Caco-2 (cell line): ENCODE measurements at regions of chr1 and their contacts with region 1.

Region 1: DNA sequence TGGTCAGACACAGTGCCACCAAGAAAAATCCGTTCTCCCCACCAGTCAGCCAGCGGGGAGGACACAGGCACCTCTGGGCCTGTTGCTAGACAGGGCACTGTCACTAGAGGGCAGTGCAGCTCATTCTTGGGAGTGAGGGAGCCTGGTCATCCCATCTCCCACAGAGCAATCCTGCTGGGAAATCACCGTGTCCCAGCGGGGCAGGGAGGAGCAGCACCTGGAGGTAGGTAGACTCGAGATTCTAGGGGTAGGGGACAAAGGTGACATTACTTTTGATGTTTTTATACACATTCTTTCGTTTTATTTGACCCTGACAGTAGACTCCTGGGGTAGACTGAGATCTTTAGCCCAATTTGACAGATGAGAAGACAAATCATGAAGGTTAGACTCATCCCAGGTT is 6.7 kb upstream of the CAMK1G start:
- DNase-seq: peak; percentile 83 to 89
- H3K4me3 ChIP-seq: no peak overlapping the region
- H3K4me3 Mint-ChIP-seq: no peak overlapping the region
- H3K27ac Mint-ChIP-seq: no peak overlapping the region
- H3K4me1 ChIP-seq: no peaks in the 10 kb centered on the region
- H3K4me1 Mint-ChIP-seq: peaks cover 6% of the 10 kb centered on the region
- H3K27me3 ChIP-seq: no peaks in the 10 kb centered on the region
- H3K27me3 Mint-ChIP-seq: peaks cover 11% of the 10 kb centered on the region
- CTCF ChIP-seq: peak; percentile 84 to 95

Region 2: DNA sequence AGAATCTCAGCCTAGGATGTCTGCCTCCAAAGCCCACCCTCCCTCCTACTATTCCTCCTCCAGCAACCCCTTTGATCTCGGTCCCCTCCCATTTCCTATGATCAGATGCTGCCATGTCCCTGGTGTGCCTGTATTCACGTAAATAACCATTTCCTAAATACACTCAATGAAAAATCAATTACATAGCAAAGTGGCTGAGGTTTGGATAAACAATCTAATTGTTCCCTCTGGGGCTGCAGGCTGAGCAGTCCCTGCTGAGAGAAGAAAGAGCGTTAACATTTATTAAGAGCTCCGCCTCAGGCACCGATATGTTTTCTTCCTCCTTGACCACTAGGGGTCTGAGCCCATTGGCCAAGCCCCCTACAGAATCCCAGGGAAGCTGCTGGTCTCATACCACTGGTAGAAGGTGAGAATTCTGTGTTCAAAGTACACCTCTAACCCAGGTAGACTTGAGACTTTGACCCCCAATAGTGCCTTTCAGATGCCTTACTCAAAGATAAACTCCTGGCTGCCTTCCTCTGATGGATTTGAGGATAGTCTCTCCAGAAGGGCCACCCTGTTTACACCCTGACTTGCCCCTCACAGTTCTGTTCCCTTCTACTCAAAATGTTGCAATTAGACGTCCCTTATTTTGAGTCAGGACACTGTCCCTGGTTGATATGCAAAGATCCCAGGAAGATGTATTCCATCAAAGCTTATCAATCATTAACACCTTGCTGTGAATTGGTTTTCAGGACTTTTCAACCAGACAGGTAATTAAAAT is 27.2 kb before region 1 on chr1:
- CTCF ChIA-PET with region 1: no interaction called
- POLR2A ChIA-PET with region 1: no interaction called
- intact Hi-C with region 1: no loop called
- DNase-seq: peak; percentile 30 to 46
- H3K4me3 ChIP-seq: no peak overlapping the region
- H3K4me3 Mint-ChIP-seq: no peak overlapping the region
- H3K27ac Mint-ChIP-seq: no peak overlapping the region
- H3K4me1 ChIP-seq: peaks cover 10% of the 10 kb centered on the region
- H3K4me1 Mint-ChIP-seq: peaks cover 7% of the 10 kb centered on the region
- H3K27me3 ChIP-seq: no peaks in the 10 kb centered on the region
- H3K27me3 Mint-ChIP-seq: no peaks in the 10 kb centered on the region
- CTCF ChIP-seq: peak; percentile 37 to 51

Region 3: DNA sequence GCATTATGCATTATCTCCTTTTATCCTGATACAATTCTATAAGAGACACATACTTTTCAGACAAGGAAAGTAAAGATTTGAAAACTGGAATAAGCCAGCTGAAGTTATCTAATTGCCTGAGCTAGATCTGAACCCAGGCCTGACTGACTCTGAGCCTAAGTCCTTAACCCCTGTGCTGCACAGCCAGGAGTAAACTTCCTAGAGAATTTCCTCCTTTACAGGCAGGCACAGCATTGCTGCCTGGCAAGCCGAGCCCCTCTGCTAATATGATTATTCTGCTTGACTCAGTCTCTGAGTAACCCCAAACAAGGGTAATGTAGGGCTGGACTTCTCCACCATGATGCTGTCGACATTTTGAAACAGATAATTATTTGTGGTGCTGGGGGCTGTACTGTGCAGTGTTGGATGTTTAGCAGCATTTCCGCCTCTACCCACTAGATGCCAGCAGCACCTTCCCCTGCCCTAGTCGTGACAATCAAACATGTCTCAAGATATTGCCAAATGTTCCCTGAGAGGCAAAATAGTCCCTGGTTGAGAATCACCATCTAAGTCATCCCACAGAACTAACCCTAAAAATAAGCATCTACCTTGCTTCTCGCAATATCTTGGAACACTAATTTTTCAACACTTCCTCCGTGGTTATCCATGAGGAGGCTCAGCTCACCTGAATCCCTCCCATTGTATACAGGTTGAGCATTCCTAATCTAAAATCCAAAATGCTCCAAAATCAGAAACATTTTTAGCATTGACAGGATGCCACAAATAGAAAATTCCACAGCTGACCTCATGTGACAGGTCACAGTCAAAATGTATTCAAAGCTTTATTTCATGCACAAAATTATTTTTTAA is 25.2 kb after region 1 on chr1:
- CTCF ChIA-PET with region 1: no interaction called
- POLR2A ChIA-PET with region 1: no interaction called
- intact Hi-C with region 1: loop called (anchors 2 kb)
- DNase-seq: peak in 1 of 2 experiments; percentile 47
- H3K4me3 ChIP-seq: no peak overlapping the region
- H3K4me3 Mint-ChIP-seq: no peak overlapping the region
- H3K27ac Mint-ChIP-seq: no peak overlapping the region
- H3K4me1 ChIP-seq: no peaks in the 10 kb centered on the region
- H3K4me1 Mint-ChIP-seq: no peaks in the 10 kb centered on the region
- H3K27me3 ChIP-seq: no peaks in the 10 kb centered on the region
- H3K27me3 Mint-ChIP-seq: peaks cover 8% of the 10 kb centered on the region
- CTCF ChIP-seq: peak; percentile 75 to 80

Region 4: DNA sequence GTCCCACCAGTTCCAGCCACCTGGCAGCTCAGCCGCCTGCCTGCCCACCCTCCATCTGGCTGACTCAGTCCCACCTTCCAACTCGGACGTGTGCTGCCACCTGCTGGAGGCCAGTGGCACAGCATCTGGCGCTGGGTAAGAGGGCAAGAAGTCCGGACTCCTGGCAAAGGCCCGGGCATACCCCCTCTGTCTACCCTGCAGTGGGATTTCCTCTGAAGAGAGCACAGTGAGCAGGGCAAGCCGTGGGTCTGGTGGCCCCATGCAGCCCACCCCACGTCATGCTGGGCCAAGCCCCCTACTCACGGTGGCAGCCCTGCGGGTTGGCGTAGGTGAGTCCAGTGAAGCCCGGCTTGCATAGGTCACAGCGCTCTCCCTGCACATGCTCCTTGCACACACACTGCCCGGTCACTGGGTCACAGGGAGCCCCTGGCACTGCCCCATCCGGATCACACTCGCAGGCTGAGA is 51.0 kb after region 1 on chr1:
- CTCF ChIA-PET with region 1: interaction called, 7 read pairs
- POLR2A ChIA-PET with region 1: no interaction called
- intact Hi-C with region 1: loop called (anchors 1 kb)
- DNase-seq: peak; percentile 53 to 74
- H3K4me3 ChIP-seq: no peak overlapping the region
- H3K4me3 Mint-ChIP-seq: no peak overlapping the region
- H3K27ac Mint-ChIP-seq: no peak overlapping the region
- H3K4me1 ChIP-seq: no peaks in the 10 kb centered on the region
- H3K4me1 Mint-ChIP-seq: no peaks in the 10 kb centered on the region
- H3K27me3 ChIP-seq: no peaks in the 10 kb centered on the region
- H3K27me3 Mint-ChIP-seq: no peaks in the 10 kb centered on the region
- CTCF ChIP-seq: peak; percentile 93 to 94

Region 5: DNA sequence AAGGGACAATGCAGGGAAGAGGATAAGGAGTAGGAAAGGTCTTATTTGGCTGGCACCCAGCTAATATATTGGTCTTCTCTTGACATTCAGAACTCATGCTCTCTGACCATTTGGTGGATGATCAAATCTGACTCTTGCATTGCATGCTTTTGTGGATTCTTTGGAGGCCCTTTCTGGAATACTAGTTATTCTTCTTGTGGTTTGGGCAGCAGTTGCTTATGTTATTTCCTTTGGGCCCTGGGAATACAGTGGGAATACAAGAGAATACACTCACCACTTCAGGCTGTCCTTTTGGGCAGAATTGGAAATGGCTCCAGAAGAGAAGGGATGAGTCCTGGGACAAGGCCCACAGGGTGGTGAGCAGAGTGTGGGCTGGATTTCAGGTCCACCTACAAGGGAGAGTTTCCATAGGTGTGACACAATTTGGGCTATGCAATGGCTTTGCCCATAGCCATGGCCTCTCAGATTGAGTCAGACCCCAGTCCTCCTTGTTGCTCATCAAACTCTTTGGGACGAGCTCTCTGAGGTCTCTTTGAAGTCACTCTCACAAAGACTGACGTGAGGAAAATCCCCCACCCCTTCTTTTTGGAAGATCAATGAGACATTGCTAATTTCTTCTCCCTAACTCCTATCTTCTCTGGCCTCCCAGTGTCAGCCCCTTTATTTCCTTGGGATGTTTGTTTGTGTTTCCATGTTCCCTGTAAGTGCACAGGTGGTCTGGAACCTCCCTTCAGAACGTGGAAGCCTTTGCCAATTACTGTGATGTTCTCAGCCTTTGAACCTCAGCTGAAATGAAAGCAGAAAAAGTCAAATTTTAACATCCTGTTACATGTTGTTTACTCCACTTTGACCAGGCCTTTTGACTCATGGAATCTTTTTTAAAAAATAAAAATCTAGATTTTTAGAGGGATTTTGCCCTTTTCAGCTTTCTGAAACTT is 147.2 kb after region 1 on chr1:
- CTCF ChIA-PET with region 1: no interaction called
- POLR2A ChIA-PET with region 1: no interaction called
- intact Hi-C with region 1: no loop called
- DNase-seq: no peak
- H3K4me3 ChIP-seq: no peak overlapping the region
- H3K4me3 Mint-ChIP-seq: no peak overlapping the region
- H3K27ac Mint-ChIP-seq: no peak overlapping the region
- H3K4me1 ChIP-seq: no peaks in the 10 kb centered on the region
- H3K4me1 Mint-ChIP-seq: no peaks in the 10 kb centered on the region
- H3K27me3 ChIP-seq: no peaks in the 10 kb centered on the region; the same call in 1 of the 2 replicates
- H3K27me3 Mint-ChIP-seq: peaks cover 19% of the 10 kb centered on the region
- CTCF ChIP-seq: no peak